ENCODE measurements at regions of chr7 and their contacts with region 1.

Region 1: DNA sequence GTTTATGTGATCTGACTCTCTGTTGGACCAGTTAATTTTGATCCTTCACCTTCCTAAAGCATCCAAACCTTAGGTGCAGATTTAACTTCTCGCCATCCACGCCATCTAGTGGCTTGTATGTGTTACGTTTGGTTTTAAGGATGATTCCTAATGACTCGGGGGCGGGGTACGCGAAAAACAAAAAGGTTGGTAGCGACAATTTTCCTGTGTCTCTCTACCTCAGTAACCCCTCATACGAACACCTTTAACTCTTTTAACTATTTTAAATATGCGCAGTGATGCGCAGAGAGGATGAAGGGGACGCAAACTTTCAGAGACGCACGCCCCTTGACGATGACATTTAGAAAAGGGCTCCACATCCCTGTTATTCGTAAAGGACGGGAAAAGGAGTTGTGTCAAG is 714 bp upstream of the KCND2 start:
- DNase-seq: peak; percentile 71
- CTCF ChIP-seq: peak; percentile 70

Region 2: DNA sequence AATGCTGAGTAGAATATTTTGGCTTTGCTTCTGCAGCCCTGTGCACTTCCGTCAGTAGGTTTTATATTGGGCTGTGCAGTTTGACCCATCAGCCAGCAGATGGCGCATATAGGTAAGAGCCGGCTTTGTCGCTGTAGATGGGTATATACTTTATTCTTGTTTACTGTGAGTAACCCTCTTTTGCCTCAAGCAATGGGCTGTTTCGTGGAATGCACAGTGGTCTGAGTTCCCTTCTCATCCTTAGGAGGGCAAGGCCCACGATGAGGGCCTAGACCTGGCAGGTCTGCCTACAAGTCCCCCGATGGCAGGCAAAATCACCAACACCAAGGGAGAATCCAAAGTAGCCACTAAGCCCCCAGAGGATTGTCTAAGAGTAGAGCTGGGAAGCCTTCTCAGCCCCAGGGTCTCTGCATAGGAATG is 1002.2 kb before region 1 on chr7:
- in situ Hi-C with region 1: loop called (anchors 25 kb)
- DNase-seq: peak; percentile 18
- CTCF ChIP-seq: peak; percentile 81

Region 3: GRCh38 chr7:119879835-119880234 is 392.4 kb before region 1 on chr7:
- in situ Hi-C with region 1: no loop called
- DNase-seq: no peak
- CTCF ChIP-seq: no peak

Region 4: DNA sequence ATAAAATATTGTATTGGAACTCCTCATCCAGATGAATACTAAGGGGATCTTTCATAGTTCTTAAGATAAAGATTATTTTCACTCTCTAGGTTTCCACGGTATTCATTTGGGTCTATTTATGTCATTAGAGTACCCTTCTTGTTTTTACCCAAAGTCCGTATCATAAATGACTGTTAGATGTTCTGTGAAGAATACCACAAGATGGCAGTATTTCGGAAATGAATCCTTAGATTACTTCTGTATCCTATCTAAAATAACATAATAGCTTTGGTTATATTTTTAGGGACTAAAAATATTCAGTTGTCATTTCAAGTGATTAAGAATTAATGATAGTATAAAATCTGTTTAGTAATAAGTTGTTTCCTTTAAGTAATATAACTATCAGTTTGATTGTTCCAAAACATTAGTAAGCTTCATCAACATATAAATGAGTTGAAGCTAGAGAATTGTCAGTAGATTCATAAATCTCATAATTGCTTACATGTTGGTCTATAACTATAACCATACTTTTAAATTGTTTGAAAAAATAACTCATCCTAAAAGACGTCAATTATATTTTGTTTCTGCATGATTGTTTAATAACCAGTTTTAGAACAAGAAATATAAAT is 336.7 kb before region 1 on chr7:
- in situ Hi-C with region 1: loop called (anchors 25 kb)
- DNase-seq: peak; percentile 12
- CTCF ChIP-seq: peak; percentile 36

Region 5: GRCh38 chr7:120089968-120090367 is 182.3 kb before region 1 on chr7:
- in situ Hi-C with region 1: no loop called
- DNase-seq: no peak
- CTCF ChIP-seq: peak; percentile 16

Region 6: DNA sequence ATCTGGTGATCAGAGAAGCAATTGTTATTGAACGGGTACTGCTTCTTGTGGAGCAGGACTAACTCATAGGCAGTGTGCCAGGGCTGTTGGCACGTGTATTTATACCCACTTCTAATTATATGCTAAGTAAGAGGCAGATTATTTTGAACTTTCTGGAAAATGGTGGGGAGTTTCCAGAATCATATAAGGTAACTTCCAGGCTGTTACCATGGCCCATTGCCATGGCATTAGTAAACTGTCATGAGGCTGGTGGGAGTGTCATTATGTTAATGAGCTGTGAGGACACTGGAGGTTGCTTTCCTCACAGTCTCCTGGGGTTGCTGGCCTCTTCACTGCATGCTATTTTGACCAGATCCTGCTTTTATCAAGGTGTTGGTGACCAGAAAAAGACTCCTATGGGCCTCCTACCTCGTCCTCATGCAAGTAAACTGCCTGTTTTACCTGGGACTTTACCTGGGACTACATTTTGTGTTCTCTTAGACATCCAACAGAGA is 123.3 kb after region 1 on chr7:
- in situ Hi-C with region 1: loop called (anchors 10 kb)
- DNase-seq: peak; percentile 2
- CTCF ChIP-seq: no peak

Region 7: GRCh38 chr7:120441850-120442249 is 169.6 kb after region 1 on chr7:
- in situ Hi-C with region 1: no loop called
- DNase-seq: peak; percentile 25
- CTCF ChIP-seq: no peak

Region 8: GRCh38 chr7:120554960-120555571 is 282.8 kb after region 1 on chr7:
- in situ Hi-C with region 1: loop called (anchors 10 kb)
- DNase-seq: peak; percentile 44
- CTCF ChIP-seq: peak; percentile 70

Region 9: DNA sequence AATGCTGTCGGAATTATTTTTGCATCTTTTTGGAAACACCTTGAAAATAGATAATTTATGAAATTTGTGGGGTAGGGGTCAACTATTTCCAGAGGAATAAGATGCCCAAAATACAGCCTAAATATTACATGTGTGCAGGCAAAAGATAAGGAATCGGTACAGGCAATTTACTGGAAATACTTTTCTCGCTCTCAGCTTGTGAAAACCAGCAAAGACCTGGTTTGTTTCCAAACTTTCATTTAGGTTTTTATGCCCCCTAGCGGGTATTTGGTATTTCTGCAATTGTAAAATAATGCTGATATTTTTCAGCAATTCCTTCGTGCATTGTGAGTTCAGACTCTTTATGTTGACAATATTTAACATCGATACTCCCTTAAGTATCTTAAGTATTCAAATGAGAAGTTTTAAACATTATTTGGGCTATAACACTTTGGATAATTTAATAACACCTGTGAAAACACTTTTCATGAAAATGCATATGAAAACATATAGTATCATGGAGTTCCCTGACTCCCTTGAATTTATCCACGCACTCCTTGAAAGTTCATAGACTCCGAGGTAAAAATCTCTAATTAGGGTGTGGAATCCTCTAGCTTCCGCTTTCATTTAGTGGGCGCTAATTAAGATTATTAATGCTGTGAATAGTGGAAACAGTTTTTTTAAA is 453.2 kb after region 1 on chr7:
- in situ Hi-C with region 1: loop called (anchors 25 kb)
- DNase-seq: peak; percentile 18
- CTCF ChIP-seq: peak; percentile 42

Region 10: GRCh38 chr7:121049028-121049791 is 776.9 kb after region 1 on chr7:
- in situ Hi-C with region 1: no loop called
- DNase-seq: no peak
- CTCF ChIP-seq: no peak

Measured in GM13976 (cell line).